Mammary epithelial cell (primary cell): ENCODE measurements at regions of chr19 and their contacts with region 1.

Region 1: GRCh38 chr19:2969104-2969504 is 8.3 kb upstream of the TLE6 start:
- DNase-seq: no peak
- H3K4me3 ChIP-seq: no peak overlapping the region
- H3K27ac ChIP-seq: no peak overlapping the region
- H3K4me1 ChIP-seq: no peaks in the 10 kb centered on the region
- H3K27me3 ChIP-seq: no peaks in the 10 kb centered on the region
- CTCF ChIP-seq: no peak

Region 2: DNA sequence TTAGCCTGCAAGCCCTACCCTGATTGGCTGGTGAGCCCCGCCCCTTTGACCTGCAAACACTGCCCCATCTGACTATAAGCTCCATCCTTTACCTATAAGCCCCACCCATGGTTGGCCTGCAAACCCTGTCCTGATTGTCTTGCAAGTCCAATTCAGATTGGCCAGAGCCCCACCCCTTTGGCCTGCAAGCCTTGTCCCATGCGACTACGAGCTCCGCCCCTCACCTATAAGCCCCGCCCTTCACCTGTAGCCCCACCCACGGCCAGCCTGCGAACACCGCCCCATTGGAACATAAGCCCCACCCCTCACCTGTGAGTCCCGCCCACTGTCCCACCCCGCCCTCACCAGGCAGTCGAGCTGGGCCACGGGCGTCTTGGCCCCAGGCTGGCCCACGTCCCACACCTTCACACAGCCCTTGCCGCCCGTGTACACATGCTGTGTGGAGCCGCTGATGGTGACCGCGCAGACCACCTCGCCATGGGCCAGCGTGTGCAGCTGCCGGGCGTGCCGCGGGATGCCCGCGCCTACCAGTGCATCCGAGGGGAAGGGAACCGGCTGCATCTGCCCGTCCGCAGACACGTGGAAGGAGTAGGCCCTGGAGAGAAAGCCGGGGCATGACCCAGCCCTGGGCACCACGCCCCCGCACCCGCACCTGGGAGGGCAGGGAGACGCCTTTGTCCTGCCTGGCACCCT is 37.1 kb after region 1 on chr19:
- CTCF ChIA-PET with region 1: no interaction called
- dilution Hi-C with region 1: loop called (anchors 5 kb)
- in situ Hi-C with region 1: no loop called
- intact Hi-C with region 1: no loop called
- DNase-seq: no peak
- H3K4me3 ChIP-seq: no peak overlapping the region
- H3K27ac ChIP-seq: no peak overlapping the region
- H3K4me1 ChIP-seq: no peaks in the 10 kb centered on the region
- H3K27me3 ChIP-seq: no peaks in the 10 kb centered on the region
- CTCF ChIP-seq: no peak

Region 3: GRCh38 chr19:3065675-3066357 is 96.7 kb after region 1 on chr19:
- CTCF ChIA-PET with region 1: no interaction called
- dilution Hi-C with region 1: loop called (anchors 5 kb)
- in situ Hi-C with region 1: no loop called
- intact Hi-C with region 1: no loop called
- DNase-seq: no peak
- H3K4me3 ChIP-seq: no peak overlapping the region
- H3K27ac ChIP-seq: no peak overlapping the region
- H3K4me1 ChIP-seq: peaks cover 6% of the 10 kb centered on the region
- H3K27me3 ChIP-seq: no peaks in the 10 kb centered on the region
- CTCF ChIP-seq: no peak